Activated T-helper 1 cell treated with anti-CD3 and anti-CD28 coated beads, Interleukin-12 subunit alpha, Interleukin-12 subunit beta, Interleukin-2, Interleukin-4 antibody, amounts not matched to agents 30 ng/mL and 10 ng/mL and 1 ng/mL, durations not matched to agents 14 hours and 24 hours and 36 hours (primary cell): ENCODE measurements at regions of chr2 and their contacts with region 1.

Region 1: GRCh38 chr2:69770193-69771146 is 28.5 kb downstream of the ANXA4 start:
- DNase-seq: peak; percentile 26
- H3K4me3 Mint-ChIP-seq: peak overlapping the region; percentile 51
- H3K27ac Mint-ChIP-seq: peak overlapping the region; percentile 81
- H3K4me1 Mint-ChIP-seq: peaks cover 80% of the 10 kb centered on the region
- H3K27me3 Mint-ChIP-seq: no peaks in the 10 kb centered on the region

Region 2: GRCh38 chr2:68742626-68743415 is 1027.6 kb before region 1 on chr2:
- intact Hi-C with region 1: loop called (anchors 10 kb)
- DNase-seq: no peak
- H3K4me3 Mint-ChIP-seq: peak overlapping the region; percentile 53
- H3K27ac Mint-ChIP-seq: peak overlapping the region; percentile 55
- H3K4me1 Mint-ChIP-seq: peaks cover 92% of the 10 kb centered on the region
- H3K27me3 Mint-ChIP-seq: no peaks in the 10 kb centered on the region

Region 3: DNA sequence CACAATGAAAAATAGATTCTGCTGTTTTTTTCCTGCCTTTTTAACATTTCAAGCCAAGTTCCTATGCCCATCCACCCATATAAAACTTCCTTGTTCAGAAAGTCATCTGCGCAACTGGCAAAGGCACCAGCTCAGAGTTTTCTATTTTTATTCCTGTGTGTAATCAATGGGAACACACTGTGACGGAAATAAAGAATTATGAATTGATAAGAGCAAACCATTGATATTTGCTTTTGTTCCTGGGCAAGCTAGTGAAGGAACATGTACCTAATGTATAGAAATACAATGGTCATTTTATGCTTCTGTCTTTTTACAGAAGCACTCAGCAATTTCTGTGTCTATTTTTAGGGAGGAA is 96.2 kb before region 1 on chr2:
- intact Hi-C with region 1: loop called (anchors 2 kb)
- DNase-seq: no peak
- H3K4me3 Mint-ChIP-seq: no peak overlapping the region
- H3K27ac Mint-ChIP-seq: no peak overlapping the region
- H3K4me1 Mint-ChIP-seq: peaks cover 24% of the 10 kb centered on the region
- H3K27me3 Mint-ChIP-seq: no peaks in the 10 kb centered on the region

Region 4: DNA sequence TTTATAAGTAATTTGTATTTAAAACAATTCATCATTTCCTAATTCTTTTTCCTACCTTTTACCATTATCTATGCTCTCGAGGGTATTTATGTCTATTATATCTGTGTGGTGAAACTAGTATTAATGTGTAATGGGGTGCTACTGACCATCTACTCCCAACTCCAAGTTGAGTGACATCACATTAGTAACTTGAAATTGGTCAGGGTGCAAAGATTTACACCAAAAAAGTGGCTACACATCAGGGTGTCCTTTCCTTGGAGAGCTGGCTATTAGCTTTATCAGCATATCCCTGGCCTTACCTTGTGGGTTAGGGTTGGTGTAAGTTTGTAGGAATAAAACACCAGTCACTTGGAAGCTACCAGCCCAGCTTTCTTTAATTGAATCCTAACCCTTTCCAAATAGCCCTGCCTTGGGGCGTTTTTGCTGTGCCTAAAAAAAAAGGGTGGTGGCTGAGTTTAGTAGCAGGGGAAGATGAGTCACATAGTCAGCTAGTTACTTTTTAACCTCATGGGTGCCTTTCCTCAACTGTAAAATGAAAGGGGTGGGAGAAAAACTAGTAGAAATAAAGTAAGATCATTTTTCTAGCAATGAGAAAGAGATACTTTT is 14.5 kb before region 1 on chr2:
- intact Hi-C with region 1: loop called (anchors 1 kb)
- DNase-seq: no peak
- H3K4me3 Mint-ChIP-seq: no peak overlapping the region
- H3K27ac Mint-ChIP-seq: no peak overlapping the region
- H3K4me1 Mint-ChIP-seq: peaks cover 19% of the 10 kb centered on the region
- H3K27me3 Mint-ChIP-seq: no peaks in the 10 kb centered on the region

Region 5: GRCh38 chr2:69829256-69830046 is 59.0 kb after region 1 on chr2 and contains the start of gene GMCL1:
- intact Hi-C with region 1: loop called (anchors 2 kb)
- DNase-seq: peak; percentile 99
- H3K4me3 Mint-ChIP-seq: peak within 1 kb of the TSS; percentile 98
- H3K27ac Mint-ChIP-seq: peak within 1 kb of the TSS; percentile 95
- H3K4me1 Mint-ChIP-seq: peaks cover 59% of the 10 kb centered on the region
- H3K27me3 Mint-ChIP-seq: no peaks in the 10 kb centered on the region
- total RNA-seq, gene GMCL1: 25.6 and 32.8 TPM in 2 replicates